Mammary epithelial cell (primary cell): ENCODE measurements at regions of chr4 and their contacts with region 1.

Region 1: DNA sequence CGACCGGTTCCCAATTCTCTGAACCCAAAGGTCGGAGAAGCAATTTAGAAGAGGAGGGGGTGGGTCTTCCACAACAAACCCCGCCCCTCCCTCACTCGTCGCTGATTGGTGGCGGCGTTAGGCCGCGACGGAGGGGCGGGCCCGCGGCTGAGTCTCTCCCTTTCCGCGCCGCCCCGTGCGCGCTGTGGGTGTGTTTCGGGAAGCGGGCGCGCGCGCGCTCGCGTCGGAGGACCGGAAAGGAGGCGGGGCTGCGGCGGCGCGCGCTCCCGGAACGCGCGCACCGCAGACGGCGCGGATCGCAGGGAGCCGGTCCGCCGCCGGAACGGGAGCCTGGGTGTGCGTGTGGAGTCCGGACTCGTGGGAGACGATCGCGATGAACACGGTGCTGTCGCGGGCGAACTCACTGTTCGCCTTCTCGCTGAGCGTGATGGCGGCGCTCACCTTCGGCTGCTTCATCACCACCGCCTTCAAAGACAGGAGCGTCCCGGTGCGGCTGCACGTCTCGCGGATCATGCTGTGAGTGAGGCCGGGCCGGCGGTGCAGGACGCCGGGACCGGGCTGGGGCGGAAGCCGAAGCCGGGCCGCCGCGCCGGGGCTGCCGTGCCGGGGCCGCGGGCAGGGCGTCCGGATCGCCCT is at the start of gene SPCS3:
- DNase-seq: peak; percentile 93
- H3K4me3 ChIP-seq: peak within 1 kb of the TSS; percentile 98 to 99 (median 98)
- H3K27ac ChIP-seq: peak within 1 kb of the TSS; percentile 92
- H3K4me1 ChIP-seq: peaks cover 2% of the 10 kb centered on the region
- H3K27me3 ChIP-seq: no peaks in the 10 kb centered on the region
- CTCF ChIP-seq: no peak
- total RNA-seq, gene SPCS3: 88.2 to 142 TPM

Region 2: DNA sequence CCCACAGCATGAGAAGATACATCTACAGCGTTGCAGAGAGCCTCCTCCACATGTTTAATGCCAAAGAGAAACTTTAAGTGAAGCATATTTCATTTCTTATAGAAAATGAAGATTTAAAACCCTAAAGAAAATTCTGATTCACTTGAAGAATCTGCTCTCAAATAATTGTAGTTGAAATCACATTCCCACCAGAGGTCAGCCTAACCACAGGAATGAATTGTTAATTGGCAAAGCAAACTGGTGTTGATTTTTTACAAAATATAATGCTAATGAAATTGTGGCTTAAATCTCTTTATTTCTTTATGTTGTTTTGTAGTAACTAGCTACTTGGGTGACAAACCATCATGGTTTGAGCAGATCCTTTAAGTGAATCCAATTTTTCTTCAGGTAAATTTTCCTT is 285.3 kb before region 1 on chr4:
- CTCF ChIA-PET with region 1: no interaction called
- dilution Hi-C with region 1: no loop called
- in situ Hi-C with region 1: no loop called
- intact Hi-C with region 1: loop called (anchors 5 kb)
- DNase-seq: peak; percentile 4
- H3K4me3 ChIP-seq: no peak overlapping the region
- H3K27ac ChIP-seq: no peak overlapping the region
- H3K4me1 ChIP-seq: no peaks in the 10 kb centered on the region
- H3K27me3 ChIP-seq: no peaks in the 10 kb centered on the region
- CTCF ChIP-seq: peak in 1 of 2 donors; percentile 42

Region 3: DNA sequence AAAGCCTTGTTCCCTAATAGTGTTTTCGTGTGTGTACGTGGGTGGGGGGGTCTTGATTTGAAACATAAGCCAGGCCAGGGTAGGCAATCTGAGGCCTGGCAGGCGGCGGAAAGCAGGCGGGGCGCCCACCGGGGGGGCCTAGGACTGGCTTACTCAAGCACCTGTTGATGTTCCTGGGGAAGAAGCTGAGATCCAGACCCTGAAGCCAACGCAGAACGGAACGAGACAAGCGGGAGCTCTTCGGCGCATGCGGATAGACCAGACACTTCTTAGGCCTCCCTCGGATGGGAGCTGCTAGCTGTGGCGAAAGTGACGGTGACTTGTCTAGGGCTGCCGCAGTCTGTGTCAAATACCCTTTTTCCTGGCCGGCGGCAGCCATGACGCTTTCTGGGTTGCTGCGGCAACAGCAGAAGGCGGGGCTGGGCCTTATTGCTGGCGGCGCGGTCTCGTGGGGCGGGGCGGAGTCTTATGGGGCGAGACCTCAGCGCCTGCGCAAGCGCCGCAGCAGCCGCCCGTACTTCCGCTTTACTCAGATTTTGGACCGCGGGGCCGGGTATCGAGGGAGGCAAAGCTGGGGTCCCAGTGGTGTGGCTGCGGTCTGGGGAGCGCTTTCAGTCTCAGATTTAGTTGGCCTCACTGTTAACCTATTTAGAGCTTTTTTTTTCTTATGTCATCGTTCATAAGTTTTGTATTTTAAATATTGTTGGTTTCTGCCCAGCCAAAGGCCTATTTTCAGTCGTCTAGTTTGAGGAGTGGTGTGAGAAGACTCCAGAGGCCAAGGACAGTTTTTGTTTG is 124.4 kb before region 1 on chr4 and contains the start of gene SPATA4:
- CTCF ChIA-PET with region 1: no interaction called
- dilution Hi-C with region 1: no loop called
- in situ Hi-C with region 1: no loop called
- intact Hi-C with region 1: loop called (anchors 2 kb)
- DNase-seq: peak; percentile 84
- H3K4me3 ChIP-seq: peak within 1 kb of the TSS; percentile 79 to 84 (median 83)
- H3K27ac ChIP-seq: peak within 1 kb of the TSS; percentile 98
- H3K4me1 ChIP-seq: peaks cover 31% of the 10 kb centered on the region
- H3K27me3 ChIP-seq: no peaks in the 10 kb centered on the region
- CTCF ChIP-seq: no peak
- total RNA-seq, gene SPATA4: 0.17 to 0.94 TPM

Region 4: DNA sequence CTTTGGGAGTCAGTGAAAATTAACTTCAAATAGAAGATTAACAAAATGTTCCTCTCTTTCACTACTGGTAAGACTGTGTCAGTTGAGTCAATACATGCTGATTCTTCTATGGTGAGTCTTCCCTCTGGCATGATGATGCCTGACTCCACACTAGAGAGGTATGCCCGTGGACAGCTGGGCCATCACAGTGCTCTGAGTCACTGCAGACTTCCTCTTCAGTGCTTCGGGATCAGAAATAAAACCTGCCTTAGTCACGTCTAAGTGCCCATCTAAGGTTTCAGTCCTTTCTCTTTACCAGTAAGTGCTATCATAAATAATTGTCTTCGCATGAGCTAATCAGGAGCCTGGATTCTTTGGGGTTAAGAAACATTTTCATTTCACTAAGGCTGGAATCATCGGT is 49.2 kb before region 1 on chr4:
- CTCF ChIA-PET with region 1: no interaction called
- dilution Hi-C with region 1: no loop called
- in situ Hi-C with region 1: no loop called
- intact Hi-C with region 1: loop called (anchors 2 kb)
- DNase-seq: peak; percentile 98
- H3K4me3 ChIP-seq: no peak overlapping the region
- H3K27ac ChIP-seq: peak overlapping the region; percentile 87
- H3K4me1 ChIP-seq: peaks cover 29% of the 10 kb centered on the region
- H3K27me3 ChIP-seq: no peaks in the 10 kb centered on the region
- CTCF ChIP-seq: no peak

Region 5: DNA sequence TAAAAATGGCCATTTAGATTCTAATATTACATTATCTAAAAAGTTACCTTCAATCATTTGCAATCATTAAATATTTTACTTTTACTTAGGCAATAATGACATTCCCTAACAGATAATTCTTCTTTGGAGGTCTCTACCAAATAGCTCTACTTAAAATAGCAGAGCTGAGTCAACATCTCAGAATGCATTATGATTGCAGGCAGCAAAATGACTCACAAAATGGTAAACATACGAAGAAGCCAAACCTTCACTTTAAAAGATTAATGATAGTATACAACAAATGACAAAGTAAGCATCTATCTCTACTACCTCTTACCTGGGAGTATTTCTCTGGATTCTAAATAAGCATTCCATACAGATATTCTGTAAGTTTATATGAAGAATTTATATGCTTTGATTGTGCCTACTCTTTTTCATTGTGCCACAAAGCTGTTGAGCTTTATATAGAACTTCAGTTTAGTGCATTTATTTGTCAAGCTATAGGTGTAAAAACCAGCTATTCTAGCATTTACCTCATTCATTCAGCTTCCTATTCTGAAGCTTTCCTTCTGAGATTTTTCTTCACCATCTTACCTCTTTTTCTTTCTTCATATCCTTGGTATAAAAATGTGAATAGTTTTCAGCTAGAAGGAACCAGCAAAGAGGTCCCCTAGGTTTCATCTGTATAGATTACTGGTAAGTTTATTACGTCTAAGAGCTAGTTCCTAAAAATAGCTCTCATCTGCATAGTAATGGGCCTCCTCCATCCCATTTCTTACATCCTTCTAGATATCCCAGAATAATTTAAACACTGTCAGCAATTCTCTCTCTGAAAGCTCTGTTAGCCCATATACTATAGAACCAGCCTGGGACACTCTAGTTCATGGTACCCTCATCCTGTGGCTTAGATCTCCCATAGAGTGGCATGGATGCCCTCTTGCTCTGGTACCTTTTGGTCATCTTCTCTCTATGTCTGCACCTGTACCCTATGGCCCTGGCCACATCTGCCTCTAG is 17.2 kb before region 1 on chr4:
- CTCF ChIA-PET with region 1: no interaction called
- dilution Hi-C with region 1: no loop called
- in situ Hi-C with region 1: no loop called
- intact Hi-C with region 1: loop called (anchors 1 kb)
- DNase-seq: peak; percentile 56
- H3K4me3 ChIP-seq: no peak overlapping the region
- H3K27ac ChIP-seq: no peak overlapping the region
- H3K4me1 ChIP-seq: no peaks in the 10 kb centered on the region
- H3K27me3 ChIP-seq: no peaks in the 10 kb centered on the region
- CTCF ChIP-seq: no peak